Heart left ventricle (tissue), 16 donors: ENCODE measurements at regions of chr2 and their contacts with region 1.

Region 1: GRCh38 chr2:161946489-161947107 is 127.4 kb downstream of the DPP4 start:
- DNase-seq: no peak
- ATAC-seq: no peak
- H3K4me3 ChIP-seq: no peak overlapping the region
- H3K27ac ChIP-seq: no peak overlapping the region
- H3K4me1 ChIP-seq: no peaks in the 10 kb centered on the region
- H3K27me3 ChIP-seq: peaks cover 0 to 20% (median 0%) of the 10 kb centered on the region in 9 donors
- CTCF ChIP-seq: peak in 11 of 12 donors; percentile 22 to 61 (median 45)
- POLR2A ChIP-seq: no peak

Region 2: DNA sequence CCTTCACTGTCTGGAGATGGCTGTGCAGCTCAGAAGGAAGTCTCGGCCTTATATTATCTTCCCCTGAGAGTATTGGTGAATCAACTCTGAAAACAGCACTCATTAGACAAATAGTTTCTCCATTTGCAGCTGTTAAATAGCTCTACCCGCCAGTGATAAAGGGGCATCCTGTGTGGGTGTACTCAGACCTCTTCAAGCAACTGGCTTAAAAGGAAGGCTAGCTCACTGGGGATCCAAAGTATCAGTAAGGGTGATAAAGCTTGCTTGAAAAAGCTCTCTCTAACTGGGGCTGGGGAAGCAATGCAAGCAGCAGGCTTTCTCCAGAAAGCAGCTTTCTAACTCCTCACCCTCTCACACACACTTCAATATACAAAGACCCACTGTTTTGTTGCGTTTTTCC is 703.3 kb before region 1 on chr2:
- intact Hi-C with region 1: loop called in 1 of 10 experiments (anchors 10 kb)
- DNase-seq: no peak
- ATAC-seq: no peak
- H3K4me3 ChIP-seq: no peak overlapping the region
- H3K27ac ChIP-seq: peak overlapping the region in 1 of 12 donors; percentile 35
- H3K4me1 ChIP-seq: peaks cover 0 to 16% (median 0%) of the 10 kb centered on the region in 12 donors
- H3K27me3 ChIP-seq: peaks cover 0 to 22% (median 0%) of the 10 kb centered on the region in 9 donors
- CTCF ChIP-seq: no peak
- POLR2A ChIP-seq: no peak

Region 3: GRCh38 chr2:161250864-161251436 is 695.6 kb before region 1 on chr2:
- intact Hi-C with region 1: loop called in 2 of 10 experiments (anchors 10 kb)
- DNase-seq: no peak
- ATAC-seq: no peak
- H3K4me3 ChIP-seq: no peak overlapping the region
- H3K27ac ChIP-seq: no peak overlapping the region
- H3K4me1 ChIP-seq: no peaks in the 10 kb centered on the region
- H3K27me3 ChIP-seq: peaks cover 0 to 23% (median 0%) of the 10 kb centered on the region in 9 donors
- CTCF ChIP-seq: peak in 11 of 12 donors; percentile 17 to 60 (median 47)
- POLR2A ChIP-seq: no peak

Region 4: DNA sequence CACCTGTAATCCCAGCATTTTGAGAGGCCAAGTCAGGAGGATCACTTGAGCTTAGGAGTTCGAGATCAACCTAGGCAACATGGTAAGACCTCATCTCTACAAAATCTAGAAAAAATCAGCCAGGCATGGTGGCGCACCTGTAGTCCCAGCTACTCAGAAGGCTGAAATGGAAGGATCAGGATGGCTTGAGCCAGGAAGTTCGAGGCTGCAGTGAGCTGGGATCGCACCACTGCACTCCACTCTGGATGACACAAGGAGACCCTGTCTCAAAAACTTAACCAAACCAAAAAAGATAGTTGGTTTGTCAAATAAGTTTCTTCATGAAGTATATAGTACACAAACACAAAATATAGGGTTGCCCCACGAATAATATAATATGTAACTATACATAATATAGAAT is 70.2 kb before region 1 on chr2:
- intact Hi-C with region 1: no loop called
- DNase-seq: no peak
- ATAC-seq: no peak
- H3K4me3 ChIP-seq: no peak overlapping the region
- H3K27ac ChIP-seq: no peak overlapping the region
- H3K4me1 ChIP-seq: no peaks in the 10 kb centered on the region
- H3K27me3 ChIP-seq: peaks cover 0 to 4% (median 0%) of the 10 kb centered on the region in 9 donors
- CTCF ChIP-seq: no peak
- POLR2A ChIP-seq: no peak